ENCODE measurements at regions of chr3 and their contacts with region 1.

Region 1: DNA sequence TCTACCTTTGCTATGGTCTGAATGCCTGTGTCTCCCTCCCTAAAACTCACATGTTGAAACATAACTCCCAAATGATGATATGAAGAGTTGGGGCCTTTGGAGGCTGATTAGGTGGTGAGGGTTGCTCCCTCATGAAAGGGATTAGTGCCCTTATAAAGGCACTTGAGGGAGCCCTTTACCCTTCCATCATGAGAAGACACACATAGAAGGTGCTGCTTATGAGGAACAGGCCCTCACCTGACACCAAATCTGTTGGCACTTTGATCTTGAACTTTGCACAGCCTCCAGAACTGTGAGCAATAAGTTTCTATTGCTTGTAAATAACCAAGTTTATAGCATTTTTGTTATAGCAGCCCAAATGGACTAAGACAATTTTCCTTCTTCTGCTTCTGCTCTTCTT is 76.2 kb upstream of the ADAMTS9 start:
- DNase-seq: peak; percentile 24
- H3K4me3 ChIP-seq: no peak overlapping the region
- H3K27ac ChIP-seq: no peak overlapping the region
- H3K4me1 ChIP-seq: no peaks in the 10 kb centered on the region
- H3K27me3 ChIP-seq: no peaks in the 10 kb centered on the region
- CTCF ChIP-seq: peak; percentile 7 to 40

Region 2: GRCh38 chr3:64954995-64955636 is 191.1 kb after region 1 on chr3:
- CTCF ChIA-PET with region 1: no interaction called
- dilution Hi-C with region 1: no loop called
- in situ Hi-C with region 1: no loop called
- intact Hi-C with region 1: loop called (anchors 10 kb)
- DNase-seq: no peak
- H3K4me3 ChIP-seq: no peak overlapping the region
- H3K27ac ChIP-seq: no peak overlapping the region
- H3K4me1 ChIP-seq: no peaks in the 10 kb centered on the region
- H3K27me3 ChIP-seq: no peaks in the 10 kb centered on the region
- CTCF ChIP-seq: no peak

Region 3: GRCh38 chr3:65080432-65080831 is 316.5 kb after region 1 on chr3:
- CTCF ChIA-PET with region 1: no interaction called
- dilution Hi-C with region 1: no loop called
- in situ Hi-C with region 1: no loop called
- intact Hi-C with region 1: no loop called
- DNase-seq: no peak
- H3K4me3 ChIP-seq: no peak overlapping the region
- H3K27ac ChIP-seq: no peak overlapping the region
- H3K4me1 ChIP-seq: no peaks in the 10 kb centered on the region
- H3K27me3 ChIP-seq: no peaks in the 10 kb centered on the region
- CTCF ChIP-seq: peak in 1 of 2 donors; percentile 36

Region 4: GRCh38 chr3:65170390-65171042 is 406.5 kb after region 1 on chr3:
- CTCF ChIA-PET with region 1: no interaction called
- dilution Hi-C with region 1: no loop called
- in situ Hi-C with region 1: no loop called
- intact Hi-C with region 1: loop called (anchors 1 kb)
- DNase-seq: peak; percentile 82
- H3K4me3 ChIP-seq: no peak overlapping the region
- H3K27ac ChIP-seq: peak overlapping the region; percentile 39
- H3K4me1 ChIP-seq: peaks cover 5% of the 10 kb centered on the region
- H3K27me3 ChIP-seq: no peaks in the 10 kb centered on the region
- CTCF ChIP-seq: peak; percentile 24 to 58

Region 5: GRCh38 chr3:65245133-65246063 is 481.4 kb after region 1 on chr3:
- CTCF ChIA-PET with region 1: no interaction called
- dilution Hi-C with region 1: no loop called
- in situ Hi-C with region 1: no loop called
- intact Hi-C with region 1: loop called (anchors 1 kb)
- DNase-seq: peak; percentile 18
- H3K4me3 ChIP-seq: no peak overlapping the region
- H3K27ac ChIP-seq: no peak overlapping the region
- H3K4me1 ChIP-seq: no peaks in the 10 kb centered on the region
- H3K27me3 ChIP-seq: peaks cover 2% of the 10 kb centered on the region
- CTCF ChIP-seq: peak; percentile 52 to 53

Region 6: DNA sequence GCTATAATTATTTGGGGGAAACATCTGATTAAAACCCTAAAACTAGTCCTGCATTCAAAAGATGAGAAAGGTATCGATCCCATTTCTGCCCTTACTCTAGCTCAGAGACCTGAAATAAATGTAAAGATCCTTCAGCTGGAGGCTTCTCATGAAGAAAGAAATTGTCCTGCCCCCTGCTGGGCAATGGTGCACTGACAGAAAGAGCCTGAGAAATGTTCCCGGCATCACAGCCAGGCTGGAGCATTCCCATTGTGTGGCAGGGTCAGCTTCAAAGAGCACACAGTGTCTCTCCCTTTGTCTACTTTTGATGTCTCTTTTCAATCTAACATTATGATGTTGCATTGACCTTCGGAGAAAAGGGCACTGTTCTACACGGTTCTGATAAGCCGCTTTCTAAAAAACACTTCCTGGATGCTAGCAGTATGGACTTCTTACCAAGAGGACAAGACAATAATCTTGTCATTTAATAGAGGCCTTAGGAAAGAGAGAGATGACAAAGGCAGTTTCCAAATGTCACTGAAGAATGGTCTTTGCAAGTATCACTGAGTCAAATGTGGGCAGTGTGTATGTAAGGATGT is 987.2 kb after region 1 on chr3:
- CTCF ChIA-PET with region 1: no interaction called
- dilution Hi-C with region 1: no loop called
- in situ Hi-C with region 1: no loop called
- intact Hi-C with region 1: loop called (anchors 10 kb)
- DNase-seq: peak; percentile 11
- H3K4me3 ChIP-seq: no peak overlapping the region
- H3K27ac ChIP-seq: no peak overlapping the region
- H3K4me1 ChIP-seq: no peaks in the 10 kb centered on the region
- H3K27me3 ChIP-seq: no peaks in the 10 kb centered on the region
- CTCF ChIP-seq: peak; percentile 73 to 76

Measured in mammary epithelial cell (primary cell).